ENCODE measurements at regions of chr13 and their contacts with region 1.

Region 1: DNA sequence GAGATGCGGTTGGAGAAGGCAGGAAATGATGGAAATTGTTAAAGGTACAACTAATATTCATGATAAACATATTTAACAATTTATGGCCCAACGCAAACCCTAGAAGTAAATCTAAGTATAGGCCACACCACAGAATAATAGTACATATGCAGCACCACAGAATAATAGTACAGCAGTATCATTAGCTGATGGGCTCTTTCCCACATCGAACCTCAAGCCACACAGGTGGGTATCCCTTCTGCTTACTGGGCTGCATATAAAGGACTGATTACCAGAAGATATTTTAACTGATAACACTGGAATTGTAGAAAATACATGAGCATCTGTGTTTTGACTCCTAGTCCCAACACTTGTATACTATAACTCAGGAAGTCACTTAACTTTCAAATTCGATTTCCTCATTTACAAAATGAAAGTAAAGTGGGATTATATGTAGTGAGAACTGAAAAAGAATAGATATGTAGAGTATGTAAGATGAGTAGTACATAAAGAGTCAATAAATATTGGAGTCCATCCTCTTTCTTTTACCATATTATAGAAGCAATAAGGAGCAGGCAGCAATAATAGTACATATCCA is 91.5 kb downstream of the TSC22D1 start:
- DNase-seq: no peak
- H3K4me3 Mint-ChIP-seq: peak overlapping the region; percentile 46
- H3K27ac Mint-ChIP-seq: peak overlapping the region; percentile 13
- H3K4me1 Mint-ChIP-seq: peaks cover 13% of the 10 kb centered on the region
- H3K27me3 Mint-ChIP-seq: no peaks in the 10 kb centered on the region

Region 2: DNA sequence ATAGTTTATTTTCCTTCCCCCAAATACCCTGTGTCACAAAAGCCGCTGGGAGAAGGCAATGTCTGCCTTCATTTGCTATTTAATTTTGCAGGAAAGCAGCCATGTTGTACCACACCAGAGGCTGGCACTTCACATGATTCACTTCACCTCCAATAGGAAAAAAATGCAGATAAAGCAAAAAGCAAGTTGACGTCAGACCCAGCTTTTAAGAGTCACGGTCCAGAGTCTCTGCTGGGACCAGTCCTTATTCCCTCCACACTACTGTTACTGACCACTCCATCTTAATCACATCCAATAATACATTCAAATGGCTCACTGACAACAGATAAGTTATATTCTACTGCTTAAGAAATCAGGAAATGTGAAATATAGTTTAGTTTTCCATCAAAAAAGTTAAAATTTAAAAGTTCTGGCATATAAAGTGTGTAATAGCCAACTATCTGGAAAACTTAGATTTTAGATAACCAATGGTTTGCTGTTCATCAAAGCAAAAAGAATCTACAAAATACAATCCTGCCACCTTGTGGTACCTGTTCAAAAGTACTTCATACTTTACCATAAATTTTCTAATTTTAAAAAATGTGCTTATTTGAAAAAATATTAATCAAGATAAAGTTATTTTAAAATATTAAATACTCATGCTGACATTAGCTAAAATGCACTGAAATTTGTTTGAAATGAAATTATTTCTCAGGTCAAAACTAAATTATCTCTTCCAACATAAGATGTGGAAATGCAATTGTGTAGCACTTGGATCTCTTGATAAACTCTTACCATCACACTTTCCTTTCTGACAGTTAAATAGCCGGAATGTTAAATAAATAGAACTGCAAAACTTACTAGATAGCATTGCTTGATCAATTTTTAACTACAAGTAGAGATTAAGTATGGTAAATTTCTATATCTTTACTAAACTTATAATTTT is 13.8 kb before region 1 on chr13:
- CTCF ChIA-PET with region 1: interaction called, 22 read pairs
- POLR2A ChIA-PET with region 1: no interaction called
- intact Hi-C with region 1: no loop called
- DNase-seq: no peak
- H3K4me3 Mint-ChIP-seq: no peak overlapping the region
- H3K27ac Mint-ChIP-seq: no peak overlapping the region
- H3K4me1 Mint-ChIP-seq: no peaks in the 10 kb centered on the region
- H3K27me3 Mint-ChIP-seq: no peaks in the 10 kb centered on the region

Region 3: GRCh38 chr13:44648392-44649103 is 163.9 kb after region 1 on chr13:
- CTCF ChIA-PET with region 1: interaction called, 8 read pairs
- POLR2A ChIA-PET with region 1: no interaction called
- intact Hi-C with region 1: loop called (anchors 1 kb)
- DNase-seq: peak; percentile 22
- H3K4me3 Mint-ChIP-seq: no peak overlapping the region
- H3K27ac Mint-ChIP-seq: no peak overlapping the region
- H3K4me1 Mint-ChIP-seq: peaks cover 16% of the 10 kb centered on the region
- H3K27me3 Mint-ChIP-seq: peaks cover 23% of the 10 kb centered on the region

Region 4: DNA sequence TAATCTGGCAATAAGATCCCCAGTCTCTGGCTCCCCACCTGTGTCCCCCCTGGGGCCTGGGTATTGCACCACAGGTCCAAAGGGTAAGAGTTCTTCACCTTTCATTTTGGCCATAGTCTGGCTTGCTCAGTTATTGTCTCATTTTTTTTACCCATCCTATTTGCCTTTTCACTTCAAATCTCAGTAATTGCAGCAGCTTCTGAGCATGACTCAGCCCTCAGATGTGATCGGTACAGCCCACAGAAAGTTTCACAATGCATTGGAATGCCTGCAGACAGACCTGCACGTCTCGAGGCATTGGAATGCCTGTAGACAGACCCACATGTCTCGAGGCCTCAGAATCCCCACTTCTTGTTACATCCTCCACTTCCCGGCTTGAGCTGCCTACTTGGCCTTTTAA is 331.0 kb after region 1 on chr13:
- CTCF ChIA-PET with region 1: no interaction called
- POLR2A ChIA-PET with region 1: no interaction called
- intact Hi-C with region 1: loop called (anchors 5 kb)
- DNase-seq: peak; percentile 62
- H3K4me3 Mint-ChIP-seq: no peak overlapping the region
- H3K27ac Mint-ChIP-seq: no peak overlapping the region
- H3K4me1 Mint-ChIP-seq: peaks cover 22% of the 10 kb centered on the region
- H3K27me3 Mint-ChIP-seq: peaks cover 25% of the 10 kb centered on the region

Region 5: GRCh38 chr13:44868397-44868796 is 383.7 kb after region 1 on chr13:
- CTCF ChIA-PET with region 1: interaction called, 14 read pairs
- POLR2A ChIA-PET with region 1: no interaction called
- intact Hi-C with region 1: no loop called
- DNase-seq: no peak
- H3K4me3 Mint-ChIP-seq: no peak overlapping the region
- H3K27ac Mint-ChIP-seq: no peak overlapping the region
- H3K4me1 Mint-ChIP-seq: peaks cover 7% of the 10 kb centered on the region
- H3K27me3 Mint-ChIP-seq: peaks cover 3% of the 10 kb centered on the region

Region 6: DNA sequence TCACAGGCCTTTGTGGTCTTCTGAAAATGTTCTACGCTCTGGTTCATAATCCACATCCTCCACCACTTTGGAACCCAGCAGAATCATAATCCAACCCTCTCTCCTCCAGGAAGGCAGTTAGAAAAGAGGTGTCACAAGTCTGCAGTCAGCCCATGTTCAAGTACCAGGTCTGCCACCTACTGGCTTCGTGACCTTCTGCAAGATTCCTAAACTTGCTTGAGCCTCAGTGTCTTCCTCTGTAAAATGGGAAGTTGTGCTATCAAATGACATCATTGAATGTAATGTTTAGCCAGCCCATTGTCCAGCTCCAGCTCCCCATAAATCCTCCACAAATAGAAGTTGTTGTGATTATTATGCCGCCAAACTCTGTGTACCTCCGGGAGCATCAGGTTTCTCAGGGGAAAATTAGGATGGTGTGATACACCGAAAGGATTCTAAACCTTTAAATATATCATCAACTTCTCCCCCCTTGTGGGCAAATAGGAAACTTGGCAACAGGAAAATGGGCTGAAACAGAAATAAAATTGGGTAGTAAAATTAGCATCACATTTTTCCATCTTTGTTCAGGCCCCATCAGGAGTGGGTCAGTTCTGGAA is 394.9 kb after region 1 on chr13:
- CTCF ChIA-PET with region 1: interaction called, 23 read pairs
- POLR2A ChIA-PET with region 1: no interaction called
- intact Hi-C with region 1: loop called (anchors 1 kb)
- DNase-seq: peak; percentile 37
- H3K4me3 Mint-ChIP-seq: no peak overlapping the region
- H3K27ac Mint-ChIP-seq: no peak overlapping the region
- H3K4me1 Mint-ChIP-seq: no peaks in the 10 kb centered on the region
- H3K27me3 Mint-ChIP-seq: peaks cover 3% of the 10 kb centered on the region

Region 7: GRCh38 chr13:44969551-44970484 is 485.2 kb after region 1 on chr13:
- CTCF ChIA-PET with region 1: interaction called, 28 read pairs
- POLR2A ChIA-PET with region 1: no interaction called
- intact Hi-C with region 1: loop called (anchors 1 kb)
- DNase-seq: no peak
- H3K4me3 Mint-ChIP-seq: no peak overlapping the region
- H3K27ac Mint-ChIP-seq: no peak overlapping the region
- H3K4me1 Mint-ChIP-seq: peaks cover 3% of the 10 kb centered on the region
- H3K27me3 Mint-ChIP-seq: no peaks in the 10 kb centered on the region

Measured in activated CD4-positive, alpha-beta memory T cell treated with anti-CD3 and anti-CD28 coated beads for 36 hours (primary cell).